CD8-positive, alpha-beta T cell (primary cell): ENCODE measurements at regions of chr11 and their contacts with region 1.

Region 1: DNA sequence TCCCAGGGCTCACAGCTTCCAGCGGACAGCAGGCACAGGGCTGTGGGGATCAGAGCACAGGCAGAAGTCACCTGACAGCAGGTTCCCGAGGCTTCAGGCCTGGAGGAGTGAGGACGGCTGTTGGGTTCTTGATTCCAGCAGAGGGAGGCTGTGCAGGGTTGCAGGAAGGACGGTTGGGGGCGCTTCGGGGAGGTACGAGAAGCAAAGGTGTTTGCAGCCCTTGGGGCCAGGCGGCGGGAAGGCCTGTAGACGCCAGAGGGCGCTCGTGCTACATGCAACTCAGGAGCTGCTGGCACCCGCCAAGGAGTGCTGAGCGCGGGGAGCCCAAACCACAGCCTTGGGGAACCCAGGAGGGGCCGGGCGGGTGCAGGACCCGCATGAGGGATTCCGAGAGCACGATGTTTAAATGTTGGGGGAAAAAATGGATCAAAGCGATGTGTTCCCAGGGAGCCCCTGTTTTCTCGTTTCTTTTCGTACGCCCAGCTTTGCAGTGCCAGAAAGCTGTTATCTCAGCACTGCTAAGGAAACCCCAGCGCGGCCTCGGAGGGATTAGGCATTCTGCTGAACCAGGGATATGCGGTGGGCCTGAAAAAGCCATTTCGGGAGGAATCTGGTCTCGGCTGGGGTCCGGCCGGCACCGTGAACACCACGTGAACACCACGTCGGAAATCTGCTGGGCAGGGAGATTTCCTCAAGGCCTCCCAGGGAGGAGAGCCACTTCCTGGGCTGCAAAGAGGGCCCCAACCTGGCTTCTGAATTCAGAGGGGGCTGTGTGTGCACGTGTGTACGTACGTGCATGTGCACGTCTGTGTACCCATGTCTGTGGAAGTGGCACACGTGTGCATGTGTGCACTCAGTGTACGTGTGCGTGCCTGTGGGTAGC is 88.1 kb downstream of the KCNQ1 start:
- DNase-seq: peak; percentile 85 to 97 (median 92)
- ATAC-seq: peak; percentile 86
- H3K4me3 ChIP-seq: peak overlapping the region; percentile 18 to 28
- H3K4me3 Mint-ChIP-seq: peak overlapping the region; percentile 76
- H3K27ac ChIP-seq: no peak overlapping the region
- H3K27ac Mint-ChIP-seq: no peak overlapping the region
- H3K4me1 ChIP-seq: peaks cover 19% of the 10 kb centered on the region
- H3K4me1 Mint-ChIP-seq: peaks cover 20% of the 10 kb centered on the region
- H3K27me3 ChIP-seq: no peaks in the 10 kb centered on the region
- H3K27me3 Mint-ChIP-seq: no peaks in the 10 kb centered on the region
- CTCF ChIP-seq: peak; percentile 94

Region 2: DNA sequence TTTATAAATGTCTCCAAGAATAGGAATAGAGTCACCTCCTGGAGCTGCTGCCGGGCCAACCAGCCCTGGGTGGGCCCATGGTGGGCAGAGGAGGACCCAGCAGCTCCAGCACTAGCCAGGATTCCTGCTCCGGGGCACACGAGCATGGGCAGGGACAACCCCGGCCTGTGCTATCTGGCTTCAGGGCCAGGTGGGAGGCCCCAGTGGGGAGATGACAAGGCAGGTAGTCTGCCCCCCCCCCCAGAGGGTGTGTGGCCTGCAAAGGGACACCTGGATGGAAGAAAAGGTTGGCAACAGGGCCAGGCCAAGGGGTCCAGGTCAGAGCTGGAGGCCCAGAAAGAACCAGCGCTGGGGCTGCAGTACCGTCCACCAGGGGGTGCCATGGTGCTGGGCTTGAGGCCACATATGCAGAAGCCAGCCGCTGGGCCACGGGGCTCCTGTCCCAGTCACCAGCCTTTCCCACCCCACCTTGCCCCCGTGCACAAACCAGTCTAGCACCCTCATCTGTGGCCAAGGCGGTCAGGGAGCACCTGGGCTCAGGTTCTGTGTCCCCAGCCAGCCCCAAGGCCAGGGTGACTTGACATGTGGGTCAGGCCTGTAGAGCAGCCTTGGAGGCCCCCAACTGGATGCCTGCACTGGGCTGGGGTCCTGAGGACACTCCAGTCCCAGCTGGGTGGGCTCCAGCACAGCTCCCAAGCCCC is 227.7 kb before region 1 on chr11:
- CTCF ChIA-PET with region 1: interaction called, 33 read pairs
- POLR2A ChIA-PET with region 1: no interaction called
- intact Hi-C with region 1: loop called (anchors 2 to 5 kb)
- DNase-seq: peak; percentile 67 to 93 (median 86)
- ATAC-seq: peak; percentile 52
- H3K4me3 ChIP-seq: peak overlapping the region; percentile 82 to 83
- H3K4me3 Mint-ChIP-seq: peak overlapping the region; percentile 91
- H3K27ac ChIP-seq: peak overlapping the region; percentile 48 to 61
- H3K27ac Mint-ChIP-seq: peak overlapping the region; percentile 86
- H3K4me1 ChIP-seq: peaks cover 56% of the 10 kb centered on the region
- H3K4me1 Mint-ChIP-seq: peaks cover 51% of the 10 kb centered on the region
- H3K27me3 ChIP-seq: no peaks in the 10 kb centered on the region
- H3K27me3 Mint-ChIP-seq: no peaks in the 10 kb centered on the region
- CTCF ChIP-seq: peak; percentile 78

Region 3: DNA sequence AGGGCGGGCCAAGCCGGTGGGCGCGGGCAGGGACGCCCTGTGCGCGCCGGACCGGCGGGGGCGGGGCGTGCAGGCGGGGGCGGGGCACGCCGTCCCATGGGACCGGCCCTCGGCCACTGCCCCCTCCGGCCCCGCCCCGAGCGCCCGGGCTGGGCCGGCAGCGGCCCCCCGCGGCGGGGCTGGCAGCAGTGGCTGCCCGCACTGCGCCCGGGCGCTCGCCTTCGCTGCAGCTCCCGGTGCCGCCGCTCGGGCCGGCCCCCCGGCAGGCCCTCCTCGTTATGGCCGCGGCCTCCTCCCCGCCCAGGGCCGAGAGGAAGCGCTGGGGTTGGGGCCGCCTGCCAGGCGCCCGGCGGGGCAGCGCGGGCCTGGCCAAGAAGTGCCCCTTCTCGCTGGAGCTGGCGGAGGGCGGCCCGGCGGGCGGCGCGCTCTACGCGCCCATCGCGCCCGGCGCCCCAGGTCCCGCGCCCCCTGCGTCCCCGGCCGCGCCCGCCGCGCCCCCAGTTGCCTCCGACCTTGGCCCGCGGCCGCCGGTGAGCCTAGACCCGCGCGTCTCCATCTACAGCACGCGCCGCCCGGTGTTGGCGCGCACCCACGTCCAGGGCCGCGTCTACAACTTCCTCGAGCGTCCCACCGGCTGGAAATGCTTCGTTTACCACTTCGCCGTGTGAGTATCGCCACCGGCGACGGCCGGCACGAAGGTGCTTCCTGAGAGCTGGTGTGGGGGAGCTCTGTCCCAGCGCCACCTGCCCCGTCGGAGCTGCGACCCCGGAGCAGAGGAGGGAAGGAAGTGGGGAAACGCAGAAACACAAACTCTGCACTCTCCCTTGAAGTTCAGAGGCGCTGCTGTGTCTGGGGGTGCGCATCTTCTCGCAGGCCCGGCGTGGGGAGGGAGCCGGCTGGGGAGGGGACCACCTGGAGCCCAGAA is 87.9 kb before region 1 on chr11 and contains the start of gene KCNQ1:
- CTCF ChIA-PET with region 1: interaction called, 53 read pairs
- POLR2A ChIA-PET with region 1: no interaction called
- intact Hi-C with region 1: no loop called
- DNase-seq: peak in 4 of 9 experiments; percentile 29 to 68 (median 65)
- ATAC-seq: peak; percentile 41
- H3K4me3 ChIP-seq: peak within 1 kb of the TSS; percentile 53 to 56
- H3K4me3 Mint-ChIP-seq: peak within 1 kb of the TSS; percentile 91
- H3K27ac ChIP-seq: peak within 1 kb of the TSS in 1 of 2 experiments; percentile 35
- H3K27ac Mint-ChIP-seq: peak within 1 kb of the TSS; percentile 88
- H3K4me1 ChIP-seq: peaks cover 51% of the 10 kb centered on the region
- H3K4me1 Mint-ChIP-seq: peaks cover 41% of the 10 kb centered on the region
- H3K27me3 ChIP-seq: peaks cover 0 to 25% of the 10 kb centered on the region in 2 experiments
- H3K27me3 Mint-ChIP-seq: no peaks in the 10 kb centered on the region
- CTCF ChIP-seq: no peak
- total RNA-seq, gene KCNQ1: 24.9 to 25.7 TPM

Region 4: DNA sequence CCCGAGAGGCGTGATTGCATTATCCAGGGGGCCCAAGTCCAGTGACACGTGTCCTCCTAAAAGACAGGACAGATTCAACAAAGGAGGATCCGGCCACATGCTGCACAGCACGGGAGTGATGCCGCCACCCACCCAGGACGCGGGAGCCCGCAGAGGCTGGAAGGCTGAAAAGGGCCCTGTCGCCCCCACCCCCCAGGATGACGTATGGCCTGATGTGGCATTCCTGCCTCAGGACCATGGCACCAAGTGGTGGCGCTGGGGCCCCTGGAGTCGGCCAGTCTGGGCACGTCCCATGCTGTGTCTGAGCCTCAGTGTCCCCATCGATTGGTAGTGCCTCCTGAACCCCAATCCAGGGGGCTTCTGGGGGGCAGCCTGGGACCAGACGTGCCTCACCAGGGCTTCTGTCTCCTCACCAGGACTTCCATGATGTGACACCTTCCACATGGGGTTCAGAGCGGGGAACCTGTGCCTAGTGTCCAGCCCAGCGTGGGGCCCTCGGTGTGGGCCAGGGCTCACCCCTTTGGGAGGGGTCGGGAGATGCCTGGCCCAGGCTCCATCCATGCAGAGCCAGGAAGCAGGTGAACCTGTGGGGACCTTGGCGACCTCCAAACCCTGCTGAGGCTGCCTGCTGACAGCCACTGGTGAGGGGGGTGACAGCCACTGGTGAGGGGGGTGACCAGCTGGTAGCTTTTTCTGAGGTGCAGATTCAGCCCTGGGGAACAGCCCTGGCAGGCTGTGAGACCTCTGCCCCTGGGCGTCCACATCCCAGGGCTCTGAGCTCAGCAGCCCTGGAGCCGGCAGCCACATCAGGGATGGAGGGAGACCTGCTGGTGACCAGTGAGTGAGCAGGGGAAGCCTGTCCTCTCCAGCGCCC is 12.8 kb before region 1 on chr11:
- CTCF ChIA-PET with region 1: interaction called, 10 read pairs
- POLR2A ChIA-PET with region 1: no interaction called
- intact Hi-C with region 1: no loop called
- DNase-seq: peak in 2 of 9 experiments; percentile 3 to 48
- ATAC-seq: no peak
- H3K4me3 ChIP-seq: no peak overlapping the region
- H3K4me3 Mint-ChIP-seq: no peak overlapping the region
- H3K27ac ChIP-seq: no peak overlapping the region
- H3K27ac Mint-ChIP-seq: no peak overlapping the region
- H3K4me1 ChIP-seq: peaks cover 3% of the 10 kb centered on the region
- H3K4me1 Mint-ChIP-seq: peaks cover 7% of the 10 kb centered on the region
- H3K27me3 ChIP-seq: no peaks in the 10 kb centered on the region
- H3K27me3 Mint-ChIP-seq: no peaks in the 10 kb centered on the region
- CTCF ChIP-seq: no peak

Region 5: DNA sequence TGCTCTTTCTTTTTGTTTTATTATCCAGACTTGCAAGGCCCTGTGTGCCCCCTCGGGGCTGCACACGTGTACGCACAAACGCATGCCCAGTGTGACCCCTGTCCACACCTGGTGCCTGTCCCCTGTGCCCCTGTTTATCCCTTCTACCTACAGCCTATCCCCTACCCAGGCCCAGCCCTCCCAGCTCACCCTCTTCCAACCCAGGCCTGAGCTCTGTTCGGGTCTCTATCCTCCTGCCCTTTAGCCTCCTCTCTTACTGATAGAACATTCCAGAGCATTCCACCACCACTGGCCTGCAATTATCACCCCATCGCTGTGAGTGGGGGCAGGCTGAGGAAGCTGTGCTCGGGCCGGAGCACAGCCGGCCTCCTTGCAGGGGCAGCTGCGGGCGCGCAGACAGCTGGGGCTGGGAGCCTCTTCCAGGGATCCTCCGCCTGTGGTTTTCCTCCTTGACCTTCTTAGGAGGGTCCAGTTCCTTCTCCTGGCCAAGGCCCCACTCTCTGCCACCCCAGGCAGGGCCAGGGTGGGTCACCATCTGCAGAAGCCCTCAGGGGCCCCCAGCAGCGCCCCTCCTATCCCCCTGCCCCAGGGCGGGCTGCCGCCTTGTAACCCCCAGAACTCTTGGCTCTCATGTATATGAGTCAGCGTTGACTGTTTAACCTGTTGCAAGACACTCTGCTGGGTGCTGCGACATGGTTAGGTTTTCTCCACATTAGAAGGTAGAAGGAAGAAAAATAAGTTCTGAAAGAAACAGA is 208.6 kb after region 1 on chr11:
- CTCF ChIA-PET with region 1: no interaction called
- POLR2A ChIA-PET with region 1: no interaction called
- intact Hi-C with region 1: no loop called
- DNase-seq: no peak
- ATAC-seq: no peak
- H3K4me3 ChIP-seq: no peak overlapping the region
- H3K4me3 Mint-ChIP-seq: no peak overlapping the region
- H3K27ac ChIP-seq: no peak overlapping the region
- H3K27ac Mint-ChIP-seq: no peak overlapping the region
- H3K4me1 ChIP-seq: no peaks in the 10 kb centered on the region
- H3K4me1 Mint-ChIP-seq: no peaks in the 10 kb centered on the region
- H3K27me3 ChIP-seq: no peaks in the 10 kb centered on the region
- H3K27me3 Mint-ChIP-seq: no peaks in the 10 kb centered on the region
- CTCF ChIP-seq: no peak

Region 6: GRCh38 chr11:2901854-2902783 is 369.2 kb after region 1 on chr11:
- CTCF ChIA-PET with region 1: interaction called, 19 read pairs
- POLR2A ChIA-PET with region 1: no interaction called
- intact Hi-C with region 1: no loop called
- DNase-seq: peak; percentile 72 to 94 (median 89)
- ATAC-seq: peak; percentile 77
- H3K4me3 ChIP-seq: peak overlapping the region; percentile 70 to 72
- H3K4me3 Mint-ChIP-seq: peak overlapping the region; percentile 78
- H3K27ac ChIP-seq: peak overlapping the region; percentile 40 to 74
- H3K27ac Mint-ChIP-seq: peak overlapping the region; percentile 32
- H3K4me1 ChIP-seq: peaks cover 42% of the 10 kb centered on the region
- H3K4me1 Mint-ChIP-seq: peaks cover 47% of the 10 kb centered on the region
- H3K27me3 ChIP-seq: no peaks in the 10 kb centered on the region
- H3K27me3 Mint-ChIP-seq: no peaks in the 10 kb centered on the region
- CTCF ChIP-seq: no peak

Region 7: DNA sequence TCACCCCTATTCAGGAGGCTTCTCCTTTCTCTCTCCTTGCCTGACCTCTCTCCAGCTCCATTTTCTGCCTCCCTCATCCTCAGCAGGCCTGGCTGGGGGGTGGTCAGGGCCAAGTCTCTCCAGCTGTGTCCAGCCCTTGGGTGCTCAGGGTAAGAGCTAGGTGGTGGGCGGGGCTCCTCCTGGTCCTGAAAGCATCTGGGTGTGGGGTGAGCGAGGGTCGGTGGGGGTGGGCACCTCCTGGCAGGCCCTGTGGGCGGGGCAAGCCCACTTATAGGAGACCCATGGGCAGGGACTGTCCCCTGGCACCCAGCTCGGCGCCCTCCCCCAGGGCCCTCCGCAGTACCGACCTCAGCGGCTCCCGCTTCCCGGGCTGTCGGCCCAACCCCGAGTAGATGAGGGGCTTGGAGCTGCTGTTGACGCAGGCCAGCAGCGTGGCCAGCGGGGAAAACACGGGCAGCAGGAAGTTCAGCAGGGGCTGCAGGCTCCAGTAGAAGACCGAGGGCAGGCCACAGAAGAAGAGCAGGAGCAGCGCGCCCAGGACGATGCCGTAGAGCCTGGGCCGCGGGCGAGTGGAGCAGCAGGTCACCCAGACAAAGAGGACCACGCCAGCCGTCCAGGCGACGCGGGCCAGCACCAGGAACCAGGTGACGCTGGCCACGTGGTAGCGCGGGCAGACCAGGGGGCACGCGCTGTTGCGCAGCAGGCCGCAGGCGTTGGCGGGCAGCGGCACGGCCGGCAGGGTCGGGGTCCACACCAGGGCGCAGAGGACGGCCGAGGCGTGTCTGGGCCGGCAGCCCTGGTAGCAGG is 684.9 kb after region 1 on chr11:
- CTCF ChIA-PET with region 1: interaction called, 5 read pairs
- POLR2A ChIA-PET with region 1: no interaction called
- intact Hi-C with region 1: loop called in 1 of 2 experiments (anchors 1 kb)
- DNase-seq: peak in 1 of 9 experiments; percentile 4
- ATAC-seq: no peak
- H3K4me3 ChIP-seq: no peak overlapping the region
- H3K4me3 Mint-ChIP-seq: no peak overlapping the region
- H3K27ac ChIP-seq: no peak overlapping the region
- H3K27ac Mint-ChIP-seq: no peak overlapping the region
- H3K4me1 ChIP-seq: peaks cover 10% of the 10 kb centered on the region
- H3K4me1 Mint-ChIP-seq: no peaks in the 10 kb centered on the region
- H3K27me3 ChIP-seq: peaks cover 0 to 4% of the 10 kb centered on the region in 2 experiments
- H3K27me3 Mint-ChIP-seq: peaks cover 25% of the 10 kb centered on the region
- CTCF ChIP-seq: no peak